ENCODE measurements at regions of chr4 and their contacts with region 1.

Region 1: DNA sequence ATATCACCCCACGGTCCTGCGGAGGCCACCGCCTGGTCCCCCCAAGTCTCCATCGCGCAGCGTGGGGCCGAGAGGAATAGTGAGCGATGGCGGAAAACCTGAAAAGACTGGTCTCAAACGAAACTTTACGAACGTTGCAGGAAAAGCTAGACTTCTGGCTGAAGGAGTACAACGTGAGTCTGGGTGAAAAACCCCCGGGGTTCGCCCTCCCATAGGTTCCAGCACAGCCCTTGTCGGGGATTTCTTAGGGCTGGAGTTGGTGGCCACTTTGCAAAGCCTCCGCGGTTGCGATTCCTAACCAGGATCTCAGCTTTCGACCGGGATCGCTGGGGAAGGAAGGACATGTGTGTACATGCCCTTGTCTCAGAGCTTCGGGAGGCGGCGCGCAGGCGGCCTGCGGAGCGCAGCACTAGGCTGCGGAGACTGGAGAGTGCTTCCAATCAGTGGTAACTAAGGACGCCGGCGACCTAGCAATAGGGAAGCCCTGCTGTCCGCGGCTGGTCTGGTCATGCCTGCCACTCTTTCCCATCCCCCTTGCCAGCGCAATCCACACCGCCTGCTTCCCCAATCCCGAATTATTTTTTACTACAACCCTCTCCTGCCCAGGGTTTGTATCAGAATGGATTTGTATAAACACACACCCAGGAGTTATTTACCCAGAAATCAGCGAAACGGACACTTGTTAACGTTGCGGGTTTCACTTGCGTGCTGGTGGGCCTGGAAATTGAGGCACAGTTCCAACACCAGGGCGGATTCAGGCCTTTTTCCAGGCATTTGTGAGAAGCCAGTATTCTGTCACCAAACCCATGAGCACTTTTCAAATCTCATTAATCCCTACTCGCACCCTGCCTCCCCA is 743 bp downstream of the SPATA18 start:
- DNase-seq: peak; percentile 74
- ATAC-seq: peak; percentile 97
- H3K4me3 ChIP-seq: peak overlapping the region; percentile 70 to 86 (median 81)
- H3K27ac ChIP-seq: peak overlapping the region; percentile 64
- H3K4me1 ChIP-seq: peaks cover 21% of the 10 kb centered on the region
- H3K27me3 ChIP-seq: no peaks in the 10 kb centered on the region; a peak in 1 of 5 replicates
- CTCF ChIP-seq: peak; percentile 26; the same call in 1 of the 2 replicates
- EP300 ChIP-seq: no peak
- POLR2A ChIP-seq: peak; percentile 50 to 78; a peak in 3 of 4 replicates
- RAD21 ChIP-seq: no peak

Region 2: DNA sequence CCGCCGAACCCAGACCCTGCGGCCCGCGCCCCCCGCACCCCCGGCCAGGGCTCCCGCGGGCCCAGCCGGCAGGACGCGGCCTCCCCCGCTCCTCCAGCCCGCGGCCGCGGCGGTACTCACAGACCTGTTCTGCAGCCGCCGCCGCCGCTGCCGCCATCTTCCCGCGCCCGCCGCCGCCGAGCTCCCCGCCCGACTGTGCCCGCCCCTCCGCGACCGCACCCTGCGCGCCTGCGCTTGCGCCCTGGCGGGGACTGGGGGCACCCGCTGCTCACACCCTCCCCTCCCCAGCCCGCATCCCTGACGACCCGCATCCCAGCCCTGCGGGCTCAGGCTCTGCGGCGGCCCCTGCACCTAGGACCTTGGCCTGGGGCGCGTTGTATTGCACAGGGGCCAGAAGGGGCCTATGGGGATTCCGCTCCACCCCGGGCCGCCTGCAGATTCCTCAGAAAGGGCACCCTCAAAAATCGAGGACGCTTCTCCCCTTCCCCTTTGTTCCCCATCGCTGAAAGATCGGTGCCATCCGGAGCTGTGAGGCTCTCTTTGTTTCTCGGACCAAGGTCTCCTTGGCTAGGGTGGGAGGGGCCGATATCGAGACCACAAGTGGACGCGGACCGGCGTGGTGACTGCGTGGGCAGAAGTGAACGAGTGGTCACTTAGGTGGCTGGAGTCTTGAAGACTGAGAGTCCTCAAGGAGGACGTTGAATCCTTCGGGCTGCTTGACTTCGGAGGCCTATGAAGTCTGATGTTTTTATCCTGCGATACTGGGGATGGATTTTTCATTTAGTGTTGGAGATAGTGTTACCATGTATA is 13.5 kb before region 1 on chr4 and contains the start of gene SGCB:
- CTCF ChIA-PET with region 1: no interaction called
- POLR2A ChIA-PET with region 1: interaction called, 11 read pairs
- in situ Hi-C with region 1: no loop called
- intact Hi-C with region 1: no loop called
- DNase-seq: no peak
- ATAC-seq: peak; percentile 93
- H3K4me3 ChIP-seq: peak within 1 kb of the TSS; percentile 77 to 87 (median 81)
- H3K27ac ChIP-seq: no peak within 1 kb of the TSS
- H3K4me1 ChIP-seq: peaks cover 30% of the 10 kb centered on the region
- H3K27me3 ChIP-seq: no peaks in the 10 kb centered on the region; a peak in 1 of 5 replicates
- CTCF ChIP-seq: no peak
- EP300 ChIP-seq: no peak
- POLR2A ChIP-seq: peak in 1 of 2 experiments; percentile 54; a peak in 1 of 4 replicates
- RAD21 ChIP-seq: no peak
- total RNA-seq, gene SGCB: 2.2 and 3.6 TPM in 2 replicates

Region 3: GRCh38 chr4:52135171-52135570 is 83.3 kb after region 1 on chr4:
- CTCF ChIA-PET with region 1: no interaction called
- POLR2A ChIA-PET with region 1: no interaction called
- in situ Hi-C with region 1: no loop called
- intact Hi-C with region 1: no loop called
- DNase-seq: no peak
- ATAC-seq: no peak
- H3K4me3 ChIP-seq: no peak overlapping the region
- H3K27ac ChIP-seq: no peak overlapping the region
- H3K4me1 ChIP-seq: no peaks in the 10 kb centered on the region
- H3K27me3 ChIP-seq: no peaks in the 10 kb centered on the region; a peak in 1 of 5 replicates
- CTCF ChIP-seq: no peak
- EP300 ChIP-seq: no peak
- POLR2A ChIP-seq: no peak
- RAD21 ChIP-seq: no peak

Region 4: GRCh38 chr4:52576857-52577623 is 525.2 kb after region 1 on chr4:
- CTCF ChIA-PET with region 1: no interaction called
- POLR2A ChIA-PET with region 1: no interaction called
- in situ Hi-C with region 1: no loop called
- intact Hi-C with region 1: no loop called
- DNase-seq: no peak
- ATAC-seq: no peak
- H3K4me3 ChIP-seq: no peak overlapping the region
- H3K27ac ChIP-seq: no peak overlapping the region
- H3K4me1 ChIP-seq: no peaks in the 10 kb centered on the region
- H3K27me3 ChIP-seq: no peaks in the 10 kb centered on the region
- CTCF ChIP-seq: no peak
- EP300 ChIP-seq: no peak
- POLR2A ChIP-seq: no peak
- RAD21 ChIP-seq: no peak

Measured in HepG2 (cell line).